ENCODE measurements at regions of chr14 and their contacts with region 1.

Region 1: GRCh38 chr14:54566410-54567223 is at the start of gene SAMD4A:
- DNase-seq: peak in 1 of 2 experiments; percentile 75
- H3K4me3 ChIP-seq: peak within 1 kb of the TSS; percentile 62 to 84 (median 77)
- H3K27ac ChIP-seq: no peak within 1 kb of the TSS
- H3K4me1 ChIP-seq: peaks cover 2 to 9% (median 6%) of the 10 kb centered on the region in 4 experiments; a peak in 6 of 7 replicates
- H3K27me3 ChIP-seq: peaks cover 0 to 30% (median 11%) of the 10 kb centered on the region in 4 experiments; a peak in 4 of 7 replicates
- CTCF ChIP-seq: no peak
- EP300 ChIP-seq: no peak
- POLR2A ChIP-seq: no peak; a peak in 1 of 3 replicates
- RAD21 ChIP-seq: peak in 1 of 2 experiments; percentile 10; a peak in 1 of 4 replicates
- total RNA-seq, gene SAMD4A: 11.5 and 12.3 TPM in 2 replicates

Region 2: DNA sequence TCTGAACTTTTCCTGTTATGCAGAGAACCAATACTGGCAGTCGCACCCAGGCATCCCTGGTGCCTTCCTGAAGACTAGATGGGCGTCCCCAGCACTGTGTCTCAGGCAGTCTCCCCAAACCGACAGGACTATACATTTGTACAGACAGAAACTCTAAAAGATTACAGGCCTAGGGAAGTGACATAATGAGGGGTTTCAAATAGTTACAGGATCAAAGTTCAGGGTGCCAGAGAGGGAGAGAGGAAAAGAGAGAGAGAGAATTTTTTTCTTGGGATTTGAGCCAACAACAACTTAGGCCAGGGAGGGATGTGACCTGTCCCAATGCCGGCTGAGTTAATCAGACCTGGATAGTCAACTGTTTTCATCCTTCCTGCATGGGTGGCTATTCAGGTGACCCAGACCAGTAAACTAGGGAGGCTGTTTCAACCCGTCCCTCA is 68.5 kb before region 1 on chr14:
- CTCF ChIA-PET with region 1: no interaction called
- POLR2A ChIA-PET with region 1: no interaction called
- DNase-seq: no peak
- H3K4me3 ChIP-seq: no peak overlapping the region
- H3K27ac ChIP-seq: no peak overlapping the region
- H3K4me1 ChIP-seq: no peaks in the 10 kb centered on the region; a peak in 1 of 7 replicates
- H3K27me3 ChIP-seq: no peaks in the 10 kb centered on the region
- CTCF ChIP-seq: no peak
- EP300 ChIP-seq: no peak
- POLR2A ChIP-seq: no peak
- RAD21 ChIP-seq: no peak

Region 3: DNA sequence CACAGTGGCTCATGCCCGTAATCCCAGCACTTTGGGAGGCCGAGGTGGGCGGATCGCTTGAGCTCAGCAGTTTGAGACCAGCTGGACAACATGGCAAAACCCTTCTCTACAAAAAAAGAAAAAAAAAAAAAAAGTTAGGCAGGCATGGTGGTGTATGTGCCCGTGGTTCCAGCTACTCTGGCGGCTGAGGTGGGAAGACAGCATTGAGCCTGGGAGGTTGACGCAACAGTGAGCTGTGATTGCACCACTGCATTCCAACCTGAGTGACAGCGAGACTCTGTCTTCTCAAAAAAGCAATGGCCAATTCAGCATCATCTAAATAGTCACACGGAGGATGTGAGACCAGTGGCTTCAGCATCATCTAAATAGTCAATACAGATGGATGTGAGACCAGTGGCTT is 10.1 kb before region 1 on chr14:
- CTCF ChIA-PET with region 1: interaction called, 8 read pairs
- POLR2A ChIA-PET with region 1: interaction called, 13 read pairs
- DNase-seq: no peak
- H3K4me3 ChIP-seq: no peak overlapping the region
- H3K27ac ChIP-seq: no peak overlapping the region
- H3K4me1 ChIP-seq: peaks cover 0 to 2% (median 0%) of the 10 kb centered on the region in 4 experiments; a peak in 1 of 7 replicates
- H3K27me3 ChIP-seq: no peaks in the 10 kb centered on the region
- CTCF ChIP-seq: no peak
- EP300 ChIP-seq: no peak
- POLR2A ChIP-seq: no peak
- RAD21 ChIP-seq: no peak

Region 4: GRCh38 chr14:54683882-54684794 is 117.5 kb after region 1 on chr14:
- CTCF ChIA-PET with region 1: interaction called, 108 read pairs
- POLR2A ChIA-PET with region 1: interaction called, 16 read pairs
- DNase-seq: peak; percentile 23 to 76
- H3K4me3 ChIP-seq: peak overlapping the region in 2 of 4 experiments; percentile 15 to 31; a peak in 4 of 8 replicates
- H3K27ac ChIP-seq: peak overlapping the region; percentile 32; the same call in 1 of the 2 replicates
- H3K4me1 ChIP-seq: peaks cover 6 to 11% (median 8%) of the 10 kb centered on the region in 4 experiments
- H3K27me3 ChIP-seq: no peaks in the 10 kb centered on the region
- CTCF ChIP-seq: no peak
- EP300 ChIP-seq: peak; percentile 20 to 72; a peak in 2 of 3 replicates
- POLR2A ChIP-seq: no peak
- RAD21 ChIP-seq: no peak

Region 5: GRCh38 chr14:54698966-54699530 is 132.4 kb after region 1 on chr14:
- CTCF ChIA-PET with region 1: interaction called, 108 read pairs
- POLR2A ChIA-PET with region 1: interaction called, 6 read pairs
- DNase-seq: no peak
- H3K4me3 ChIP-seq: no peak overlapping the region
- H3K27ac ChIP-seq: no peak overlapping the region; the same call in 1 of the 2 replicates
- H3K4me1 ChIP-seq: peaks cover 0 to 2% (median 0%) of the 10 kb centered on the region in 4 experiments; a peak in 1 of 7 replicates
- H3K27me3 ChIP-seq: no peaks in the 10 kb centered on the region
- CTCF ChIP-seq: no peak
- EP300 ChIP-seq: no peak
- POLR2A ChIP-seq: no peak
- RAD21 ChIP-seq: no peak

Region 6: DNA sequence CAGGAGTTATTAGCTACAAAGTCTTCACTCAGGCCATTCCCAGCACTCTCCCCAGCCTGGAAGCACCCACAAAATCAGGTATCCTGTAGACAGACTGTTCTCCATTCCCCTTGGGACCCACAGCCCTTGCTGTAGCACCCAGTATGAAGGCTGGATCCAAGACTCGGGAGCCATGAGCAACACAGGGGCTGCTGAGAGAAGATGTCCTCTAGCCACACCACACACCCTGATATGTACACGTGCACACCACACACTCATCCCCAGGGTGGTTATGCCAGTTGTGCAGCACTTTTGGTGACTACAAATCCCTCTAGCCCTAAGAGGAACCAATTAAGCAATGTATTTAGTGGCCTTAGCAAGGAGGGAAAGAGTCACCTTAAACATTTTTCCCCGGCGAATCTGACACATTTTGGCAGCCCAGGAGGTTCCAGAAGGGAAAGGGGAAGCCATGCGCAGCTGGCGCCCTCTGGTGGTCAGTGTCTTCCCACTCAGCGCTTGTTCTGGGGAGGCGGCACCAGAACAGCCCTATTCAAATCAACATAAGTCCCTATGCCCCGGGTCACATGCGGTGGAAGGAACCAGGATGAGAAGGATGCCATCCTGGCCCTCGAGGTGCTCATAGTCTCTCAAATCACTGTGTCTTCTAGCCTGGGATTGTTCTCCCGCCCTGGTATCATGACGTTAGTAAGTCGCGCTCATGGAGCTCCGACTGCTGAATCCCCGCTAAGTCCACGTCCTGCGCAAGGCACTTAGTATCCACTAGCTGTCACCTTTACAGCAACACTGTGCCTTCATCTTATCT is 239.1 kb after region 1 on chr14:
- CTCF ChIA-PET with region 1: interaction called, 32 read pairs
- POLR2A ChIA-PET with region 1: interaction called, 3 read pairs
- DNase-seq: peak; percentile 70 to 94
- H3K4me3 ChIP-seq: no peak overlapping the region; a peak in 1 of 8 replicates
- H3K27ac ChIP-seq: no peak overlapping the region
- H3K4me1 ChIP-seq: peaks cover 2 to 15% (median 8%) of the 10 kb centered on the region in 4 experiments; a peak in 5 of 7 replicates
- H3K27me3 ChIP-seq: no peaks in the 10 kb centered on the region; a peak in 1 of 7 replicates
- CTCF ChIP-seq: peak; percentile 89 to 94 (median 92)
- EP300 ChIP-seq: 0 out of 3 replicates have a peak, but pooled peaks of 1 of the 2 experiments have one; percentile 35
- POLR2A ChIP-seq: no peak
- RAD21 ChIP-seq: peak; percentile 93